ENCODE measurements at regions of chr19 and their contacts with region 1.

Region 1: GRCh38 chr19:14432791-14433553 is at the start of gene PKN1:
- DNase-seq: peak; percentile 45 to 56 (median 51)
- H3K4me3 ChIP-seq: peak within 1 kb of the TSS; percentile 66 to 84 (median 79)
- H3K27ac ChIP-seq: peak within 1 kb of the TSS in 1 of 2 experiments; percentile 73
- H3K4me1 ChIP-seq: peaks cover 0 to 33% (median 31%) of the 10 kb centered on the region in 4 experiments
- H3K27me3 ChIP-seq: no peaks in the 10 kb centered on the region

Region 2: DNA sequence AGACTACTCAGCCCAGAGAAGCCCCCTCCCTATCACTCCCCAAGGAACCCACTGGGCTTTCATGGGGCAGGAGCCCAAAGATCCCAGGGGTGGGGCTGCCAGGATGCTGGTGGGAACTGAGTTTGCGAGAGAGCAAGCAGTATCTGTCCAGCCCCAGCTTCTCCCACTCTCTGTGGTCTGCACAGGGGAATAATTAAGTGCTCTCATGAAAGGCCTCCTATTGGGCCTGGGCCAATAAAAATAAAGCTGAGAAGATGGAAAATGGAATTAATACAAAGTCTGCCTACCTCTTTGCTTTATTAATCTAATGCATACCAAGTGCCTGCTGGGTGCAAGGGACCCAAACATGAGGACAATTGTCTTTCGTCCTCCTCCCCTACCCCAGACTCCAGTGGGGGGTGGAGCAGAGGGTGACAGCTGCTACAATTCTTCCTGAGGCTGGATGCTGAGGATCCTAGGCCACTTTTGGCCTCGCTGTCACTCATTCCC is 19.2 kb before region 1 on chr19:
- CTCF ChIA-PET with region 1: interaction called, 16 read pairs
- POLR2A ChIA-PET with region 1: interaction called, 4 read pairs
- DNase-seq: no peak
- H3K4me3 ChIP-seq: no peak overlapping the region
- H3K27ac ChIP-seq: no peak overlapping the region
- H3K4me1 ChIP-seq: peaks cover 0 to 27% (median 24%) of the 10 kb centered on the region in 4 experiments
- H3K27me3 ChIP-seq: no peaks in the 10 kb centered on the region

Region 3: DNA sequence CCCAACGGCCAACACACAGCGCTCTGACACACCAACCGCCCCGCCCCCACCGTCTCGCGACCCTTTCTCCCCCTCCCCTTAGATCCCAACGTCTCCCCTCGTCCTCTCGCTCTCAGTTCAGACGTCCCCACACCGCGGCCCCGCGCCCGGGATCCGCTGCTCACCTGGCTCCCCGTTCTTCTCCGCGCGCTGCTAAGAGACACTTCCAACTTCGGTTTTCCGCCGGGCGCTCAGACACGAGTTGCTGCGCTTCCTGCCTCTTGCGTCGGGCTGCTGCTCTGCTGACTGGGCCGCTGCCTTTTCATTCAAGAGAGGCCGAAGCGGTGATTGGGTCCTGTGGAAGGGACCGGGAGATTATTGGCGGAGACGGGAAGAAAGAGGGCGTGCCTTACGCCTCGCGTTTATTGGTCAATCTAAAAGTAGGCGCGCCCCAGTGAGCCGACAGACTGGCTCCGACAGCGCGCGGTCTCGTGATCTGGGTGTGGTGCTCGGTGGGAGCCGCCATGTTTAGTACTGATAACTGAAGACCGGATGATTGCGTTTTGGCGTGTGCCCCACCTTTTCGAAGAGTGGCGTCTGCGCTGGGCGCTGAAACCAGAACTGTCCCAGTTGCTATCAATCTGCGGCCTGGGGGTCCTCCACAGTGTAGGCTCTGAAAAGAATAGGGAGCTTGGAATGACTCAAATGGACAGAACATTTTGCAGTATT is 13.7 kb before region 1 on chr19 and contains the start of gene DDX39A:
- CTCF ChIA-PET with region 1: interaction called, 16 read pairs
- POLR2A ChIA-PET with region 1: interaction called, 4 read pairs
- DNase-seq: peak; percentile 99 to 100 (median 100)
- H3K4me3 ChIP-seq: peak within 1 kb of the TSS; percentile 42 to 94 (median 81)
- H3K27ac ChIP-seq: peak within 1 kb of the TSS; percentile 88 to 96
- H3K4me1 ChIP-seq: peaks cover 2 to 37% (median 31%) of the 10 kb centered on the region in 4 experiments
- H3K27me3 ChIP-seq: no peaks in the 10 kb centered on the region

Region 4: GRCh38 chr19:14648506-14648905 is 215.5 kb after region 1 on chr19:
- CTCF ChIA-PET with region 1: no interaction called
- POLR2A ChIA-PET with region 1: no interaction called
- DNase-seq: no peak
- H3K4me3 ChIP-seq: no peak overlapping the region
- H3K27ac ChIP-seq: no peak overlapping the region
- H3K4me1 ChIP-seq: no peaks in the 10 kb centered on the region
- H3K27me3 ChIP-seq: peaks cover 0 to 7% (median 0%) of the 10 kb centered on the region in 5 experiments